Calu3 (cell line): ENCODE measurements at regions of chr12 and their contacts with region 1.

Region 1: GRCh38 chr12:132614861-132615578 is 3.6 kb upstream of the P2RX2 start:
- DNase-seq: peak; percentile 93
- H3K4me3 Mint-ChIP-seq: no peak overlapping the region
- H3K27ac Mint-ChIP-seq: no peak overlapping the region
- H3K4me1 Mint-ChIP-seq: no peaks in the 10 kb centered on the region
- H3K27me3 Mint-ChIP-seq: peaks cover 66% of the 10 kb centered on the region
- CTCF ChIP-seq: peak; percentile 93

Region 2: DNA sequence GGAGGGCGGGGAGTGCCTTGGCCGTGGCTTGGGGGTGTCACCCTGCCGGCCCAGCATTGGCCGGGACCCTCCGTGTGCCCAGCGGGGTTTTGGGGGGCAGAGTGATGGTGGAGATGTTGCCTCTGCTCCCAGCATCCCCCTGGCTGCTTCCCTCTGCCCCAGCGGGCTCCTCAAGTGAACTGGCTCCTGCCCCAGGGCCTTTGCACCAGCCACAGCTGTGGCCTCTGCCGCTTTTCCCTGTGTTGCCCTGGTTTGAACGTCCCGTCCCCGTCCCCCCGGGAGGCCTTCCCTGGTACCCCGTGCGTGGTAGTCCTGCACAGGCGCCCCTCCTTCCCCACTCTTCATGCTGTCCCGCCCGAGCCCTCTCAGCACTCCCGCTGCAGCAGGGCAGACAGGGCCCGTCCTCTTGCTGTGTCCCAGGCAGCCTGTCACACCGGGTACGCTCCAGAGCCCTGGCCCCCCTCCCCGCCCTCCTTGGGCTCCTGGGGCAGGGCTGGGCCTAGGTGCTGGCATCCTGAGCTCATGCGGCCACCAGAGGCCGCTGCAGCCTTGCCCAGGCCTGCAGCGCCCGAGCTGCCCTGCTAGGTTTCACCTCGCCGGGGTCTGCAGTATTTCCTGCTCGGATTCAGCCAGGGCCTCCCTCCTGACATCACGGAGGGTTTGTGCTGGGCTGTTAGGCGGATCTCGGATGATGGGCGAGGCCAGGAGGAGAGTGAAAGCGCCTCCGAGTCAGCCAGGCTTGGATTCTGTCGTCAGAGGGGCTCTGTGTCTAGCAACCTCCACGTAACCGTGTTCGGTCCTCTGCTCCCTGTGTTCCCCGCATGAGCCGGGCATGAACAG is 461.3 kb before region 1 on chr12:
- CTCF ChIA-PET with region 1: interaction called, 11 read pairs
- intact Hi-C with region 1: loop called (anchors 5 kb)
- DNase-seq: peak; percentile 90
- H3K4me3 Mint-ChIP-seq: peak overlapping the region; percentile 50
- H3K27ac Mint-ChIP-seq: no peak overlapping the region
- H3K4me1 Mint-ChIP-seq: no peaks in the 10 kb centered on the region
- H3K27me3 Mint-ChIP-seq: no peaks in the 10 kb centered on the region
- CTCF ChIP-seq: peak; percentile 91